AG04449 (cell line): ENCODE measurements at regions of chr3 and their contacts with region 1.

Region 1: DNA sequence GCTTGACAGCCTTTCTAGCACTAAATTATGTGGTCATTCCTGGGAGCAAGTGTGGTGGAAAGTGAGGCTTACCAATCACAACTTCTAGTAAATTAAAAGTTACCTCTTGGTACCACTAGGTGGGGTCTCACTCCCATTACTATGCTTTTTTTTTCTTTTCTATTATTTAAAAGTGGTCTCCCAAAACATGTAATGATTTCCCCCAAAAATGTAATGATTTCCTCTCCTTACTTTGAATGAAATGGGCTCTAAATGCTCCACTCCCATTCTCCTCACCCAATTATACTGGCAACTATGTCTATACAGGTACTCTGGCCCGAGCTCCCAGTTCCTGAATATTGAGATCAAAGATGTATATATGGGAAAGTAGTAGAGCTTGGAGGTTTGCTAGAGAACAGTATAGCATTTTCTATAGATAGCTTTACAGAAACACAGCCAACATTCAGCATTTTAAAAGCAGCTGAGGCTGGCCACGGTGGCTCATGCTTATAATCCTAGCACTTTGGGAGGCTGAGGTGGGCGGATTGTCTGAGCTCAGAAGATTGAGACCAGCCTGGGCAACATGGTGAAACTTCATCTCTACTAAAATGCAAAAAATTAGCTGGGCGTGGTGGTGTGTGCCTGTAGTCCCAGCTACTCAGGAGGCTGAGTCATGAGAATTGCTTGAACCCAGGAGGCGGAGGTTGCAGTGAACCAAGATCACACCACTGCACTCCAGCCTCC is 70.9 kb downstream of the DCUN1D1 start:
- DNase-seq: no peak
- H3K4me3 ChIP-seq: no peak overlapping the region
- CTCF ChIP-seq: peak; percentile 24

Region 2: GRCh38 chr3:182920515-182921084 is 11.1 kb after region 1 on chr3:
- CTCF ChIA-PET with region 1: interaction called, 10 read pairs
- POLR2A ChIA-PET with region 1: interaction called, 4 read pairs
- DNase-seq: no peak
- H3K4me3 ChIP-seq: no peak overlapping the region
- CTCF ChIP-seq: no peak